ENCODE measurements at regions of chr1 and their contacts with region 1.

Region 1: DNA sequence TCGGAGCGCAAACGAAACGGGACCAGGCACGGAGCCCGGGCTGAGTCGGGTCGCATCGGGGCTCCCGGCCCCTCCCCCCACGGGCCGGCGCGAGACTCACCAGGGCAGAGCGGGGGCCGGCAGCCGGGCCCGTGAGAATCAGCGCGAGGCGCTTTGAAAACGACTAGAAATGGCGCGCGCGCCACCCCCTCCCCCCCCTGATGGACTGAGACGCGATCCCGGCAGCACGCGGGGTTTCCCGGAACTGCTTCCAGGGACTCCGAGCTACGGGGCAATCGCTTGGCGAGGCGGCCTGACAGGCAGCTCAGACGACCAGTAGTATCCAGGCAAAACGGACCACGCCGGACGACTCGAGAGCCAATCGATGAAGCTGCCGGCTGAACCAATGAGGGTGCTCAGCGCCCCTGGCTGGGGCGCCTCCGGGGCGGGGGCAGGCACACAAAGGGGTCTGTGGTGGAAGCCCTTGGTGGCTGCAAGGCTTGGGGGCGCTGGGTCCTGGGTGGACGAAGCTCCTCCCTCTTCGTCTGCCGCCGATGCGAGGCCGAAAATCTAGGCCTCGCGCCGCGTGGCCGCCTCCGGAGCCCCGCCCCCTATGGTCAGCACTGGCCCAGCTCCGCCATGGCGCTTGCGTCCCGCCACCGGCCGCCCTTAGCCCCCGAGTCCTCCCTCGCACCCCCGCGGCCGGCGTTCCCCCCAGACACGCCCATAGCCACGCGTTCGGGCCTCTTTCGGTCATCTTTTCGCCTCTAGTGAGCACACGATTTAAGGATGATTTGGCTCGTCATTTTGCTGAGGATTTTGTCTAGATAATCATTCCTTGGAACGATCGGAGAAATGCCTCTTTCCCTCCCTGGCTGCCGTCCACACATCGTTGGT is at the start of gene HNRNPR:
- DNase-seq: peak; percentile 100
- H3K4me3 ChIP-seq: peak within 1 kb of the TSS; percentile 83
- H3K27ac ChIP-seq: peak within 1 kb of the TSS; percentile 86
- H3K27me3 ChIP-seq: no peaks in the 10 kb centered on the region
- CTCF ChIP-seq: no peak
- polyA plus RNA-seq, gene HNRNPR: 134 and 171 TPM in 2 replicates

Region 2: GRCh38 chr1:23330846-23331245 is 13.5 kb before region 1 on chr1:
- CTCF ChIA-PET with region 1: no interaction called
- POLR2A ChIA-PET with region 1: interaction called, 11 read pairs
- DNase-seq: no peak
- H3K4me3 ChIP-seq: no peak overlapping the region
- H3K27ac ChIP-seq: no peak overlapping the region
- H3K27me3 ChIP-seq: no peaks in the 10 kb centered on the region
- CTCF ChIP-seq: no peak

Region 3: DNA sequence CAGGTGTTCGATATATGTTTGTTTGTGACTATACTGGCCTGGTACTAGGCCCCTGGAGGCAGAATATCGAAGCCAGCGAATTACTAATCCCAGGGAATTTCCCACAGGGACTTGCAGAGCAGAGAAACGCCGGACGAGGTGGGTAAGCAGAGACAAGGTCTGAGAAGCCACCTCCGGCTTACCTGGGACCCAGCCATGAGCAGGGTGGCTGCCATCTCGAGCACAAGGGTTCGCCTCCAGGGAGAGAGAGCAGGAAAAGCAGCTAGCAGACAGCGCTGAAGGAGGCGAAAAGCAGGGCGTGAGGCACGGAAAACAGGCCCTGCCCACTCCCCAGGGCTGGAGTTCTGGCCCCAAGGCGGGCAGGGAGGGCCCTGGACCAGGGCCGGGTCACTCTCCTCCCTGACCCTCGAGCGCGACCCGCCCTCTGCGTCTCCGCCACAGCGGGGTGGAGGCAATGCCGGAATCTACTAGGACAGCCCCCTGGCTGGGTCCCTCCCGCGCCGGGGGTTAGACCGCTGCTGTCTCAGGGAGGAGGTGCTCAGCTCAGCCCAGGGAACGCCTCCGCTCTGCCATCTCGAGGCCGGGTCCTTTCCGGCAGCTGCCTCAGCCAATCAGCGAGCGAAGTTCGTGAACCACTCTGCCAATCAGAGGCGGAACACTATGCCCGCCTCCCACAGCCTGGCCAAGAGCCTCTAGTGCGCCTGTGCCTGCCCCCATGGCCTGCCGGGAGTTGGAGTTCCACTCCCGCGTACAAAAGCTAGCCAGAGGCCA is 23.6 kb after region 1 on chr1:
- CTCF ChIA-PET with region 1: interaction called, 6 read pairs
- POLR2A ChIA-PET with region 1: interaction called, 41 read pairs
- DNase-seq: peak; percentile 97
- H3K4me3 ChIP-seq: peak overlapping the region; percentile 99
- H3K27ac ChIP-seq: peak overlapping the region; percentile 96
- H3K27me3 ChIP-seq: no peaks in the 10 kb centered on the region
- CTCF ChIP-seq: no peak

Region 4: GRCh38 chr1:23384302-23385058 is 40.1 kb after region 1 on chr1:
- CTCF ChIA-PET with region 1: no interaction called
- POLR2A ChIA-PET with region 1: interaction called, 15 read pairs
- DNase-seq: no peak
- H3K4me3 ChIP-seq: no peak overlapping the region
- H3K27ac ChIP-seq: no peak overlapping the region
- H3K27me3 ChIP-seq: no peaks in the 10 kb centered on the region
- CTCF ChIP-seq: no peak

Region 5: DNA sequence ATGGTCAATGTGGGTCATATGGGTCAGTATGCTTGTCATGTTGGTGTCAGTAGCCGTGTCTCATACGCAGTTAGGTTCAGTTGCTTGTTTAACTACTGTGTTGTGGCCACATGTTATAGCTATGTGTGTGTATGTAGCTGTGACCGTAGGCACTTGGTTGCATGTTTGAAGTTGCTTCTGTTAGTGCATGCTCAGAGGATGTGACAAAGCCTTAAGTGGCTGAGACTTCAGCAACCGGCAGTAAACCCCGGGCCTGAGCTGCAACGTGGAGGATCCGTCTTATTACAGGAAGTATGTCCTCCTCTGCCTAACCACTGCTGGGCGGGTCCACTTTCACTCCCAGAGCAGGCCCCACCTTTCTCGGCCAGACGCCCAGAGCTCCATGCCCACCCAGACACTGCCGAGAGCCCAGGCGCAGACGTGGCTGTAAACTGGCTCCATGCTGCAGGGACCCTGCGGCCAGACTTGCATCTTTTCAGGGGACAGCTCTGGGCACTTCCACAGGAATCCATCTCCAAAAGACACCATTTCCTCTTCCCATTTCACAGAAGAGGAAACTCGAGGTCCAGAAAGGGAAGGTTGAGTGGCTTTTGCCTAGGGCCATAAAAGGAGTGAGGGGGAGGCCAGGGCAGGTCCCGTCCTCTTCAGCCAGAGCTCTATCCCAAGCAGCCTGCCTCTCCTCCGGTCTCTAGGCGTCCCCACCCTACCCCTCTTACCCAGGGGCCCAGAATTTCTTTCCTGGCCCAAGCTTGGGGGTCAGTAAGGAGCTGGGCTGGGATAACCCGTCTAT is 78.1 kb after region 1 on chr1:
- CTCF ChIA-PET with region 1: interaction called, 4 read pairs
- POLR2A ChIA-PET with region 1: interaction called, 27 read pairs
- DNase-seq: peak; percentile 43
- H3K4me3 ChIP-seq: peak overlapping the region; percentile 34
- H3K27ac ChIP-seq: peak overlapping the region; percentile 88
- H3K27me3 ChIP-seq: no peaks in the 10 kb centered on the region
- CTCF ChIP-seq: no peak